HepG2 (cell line): ENCODE measurements at regions of chr3 and their contacts with region 1.

Region 1: DNA sequence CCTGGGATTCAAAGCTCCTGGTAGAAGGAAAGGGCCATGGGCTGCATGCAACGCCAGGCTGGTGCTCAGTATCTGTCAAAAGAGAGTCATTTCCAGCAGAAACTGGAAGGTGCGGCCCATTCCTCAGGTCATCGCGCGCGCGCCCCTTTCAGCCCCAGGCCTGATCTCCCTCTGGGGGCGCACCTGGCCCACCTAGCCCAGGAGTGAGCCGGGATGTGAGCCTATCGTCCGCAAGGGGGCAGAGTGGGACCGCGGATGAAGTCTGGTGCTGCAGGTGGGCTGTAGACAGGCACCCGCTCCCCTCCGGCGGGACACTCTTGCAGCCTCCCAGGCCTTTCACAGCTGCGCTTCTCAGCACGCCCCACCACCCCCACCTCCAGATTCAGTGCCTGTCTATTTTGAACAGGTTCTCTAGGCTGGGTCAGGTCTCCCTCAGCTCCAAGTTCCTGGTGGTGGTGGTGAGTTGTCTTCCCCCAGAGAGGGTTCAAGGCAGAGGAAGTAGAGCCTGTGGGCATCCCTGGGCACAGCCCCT is 5.8 kb upstream of the RPL29 start:
- DNase-seq: peak; percentile 78
- ATAC-seq: peak; percentile 83
- H3K4me3 ChIP-seq: peak overlapping the region in 1 of 3 experiments; percentile 42; a peak in 1 of 6 replicates
- H3K27ac ChIP-seq: no peak overlapping the region
- H3K4me1 ChIP-seq: peaks cover 60% of the 10 kb centered on the region
- H3K27me3 ChIP-seq: peaks cover 0 to 37% of the 10 kb centered on the region in 2 experiments; a peak in 3 of 5 replicates
- CTCF ChIP-seq: peak; percentile 99
- EP300 ChIP-seq: no peak
- POLR2A ChIP-seq: no peak
- RAD21 ChIP-seq: peak; percentile 99

Region 2: GRCh38 chr3:52041118-52041731 is 39.7 kb after region 1 on chr3:
- CTCF ChIA-PET with region 1: no interaction called
- POLR2A ChIA-PET with region 1: no interaction called
- in situ Hi-C with region 1: loop called (anchors 5 kb)
- intact Hi-C with region 1: loop called (anchors 2 kb)
- DNase-seq: peak; percentile 38
- ATAC-seq: peak; percentile 50
- H3K4me3 ChIP-seq: 0 out of 6 replicates have a peak overlapping the region, but pooled peaks of 1 of the 3 experiments have one; percentile 14
- H3K27ac ChIP-seq: no peak overlapping the region
- H3K4me1 ChIP-seq: peaks cover 67% of the 10 kb centered on the region
- H3K27me3 ChIP-seq: no peaks in the 10 kb centered on the region; a peak in 1 of 5 replicates
- CTCF ChIP-seq: peak; percentile 40
- EP300 ChIP-seq: no peak
- POLR2A ChIP-seq: no peak
- RAD21 ChIP-seq: peak; percentile 17; the same call in 1 of the 2 replicates

Region 3: DNA sequence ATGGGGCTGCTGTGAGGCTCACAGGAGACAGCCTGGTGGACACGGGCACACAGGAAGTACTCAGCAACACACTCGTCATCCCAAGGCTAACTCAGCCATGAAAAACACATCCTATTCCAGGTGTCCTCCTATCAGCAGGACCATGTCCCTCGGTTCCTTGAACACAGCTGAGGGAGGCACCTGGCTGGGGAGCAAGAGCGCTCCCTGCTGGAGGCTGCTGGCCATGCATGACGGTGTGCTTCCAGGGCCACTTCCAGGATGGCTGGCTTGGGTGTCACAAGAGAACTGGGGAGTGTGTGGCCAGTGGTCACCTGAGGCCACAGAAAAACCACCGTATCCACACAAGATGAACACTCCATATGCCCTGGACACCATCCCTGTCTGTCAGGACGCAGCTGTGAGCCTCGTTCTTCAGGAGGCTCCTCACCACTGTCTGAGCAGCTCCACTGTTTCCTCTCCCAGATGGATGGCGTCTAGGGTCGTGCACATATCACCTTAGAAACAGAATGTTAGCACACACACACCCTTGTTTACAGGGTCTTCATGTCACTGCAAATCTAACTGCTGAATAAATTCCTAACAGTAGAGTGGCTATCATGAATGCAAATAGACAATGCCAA is 121.7 kb after region 1 on chr3:
- CTCF ChIA-PET with region 1: interaction called, 62 read pairs
- POLR2A ChIA-PET with region 1: interaction called, 4 read pairs
- in situ Hi-C with region 1: no loop called
- intact Hi-C with region 1: loop called (anchors 1 kb)
- DNase-seq: peak; percentile 39
- ATAC-seq: peak; percentile 92
- H3K4me3 ChIP-seq: no peak overlapping the region
- H3K27ac ChIP-seq: no peak overlapping the region
- H3K4me1 ChIP-seq: peaks cover 7% of the 10 kb centered on the region
- H3K27me3 ChIP-seq: no peaks in the 10 kb centered on the region
- CTCF ChIP-seq: peak; percentile 100
- EP300 ChIP-seq: no peak
- POLR2A ChIP-seq: no peak
- RAD21 ChIP-seq: peak; percentile 96

Region 4: DNA sequence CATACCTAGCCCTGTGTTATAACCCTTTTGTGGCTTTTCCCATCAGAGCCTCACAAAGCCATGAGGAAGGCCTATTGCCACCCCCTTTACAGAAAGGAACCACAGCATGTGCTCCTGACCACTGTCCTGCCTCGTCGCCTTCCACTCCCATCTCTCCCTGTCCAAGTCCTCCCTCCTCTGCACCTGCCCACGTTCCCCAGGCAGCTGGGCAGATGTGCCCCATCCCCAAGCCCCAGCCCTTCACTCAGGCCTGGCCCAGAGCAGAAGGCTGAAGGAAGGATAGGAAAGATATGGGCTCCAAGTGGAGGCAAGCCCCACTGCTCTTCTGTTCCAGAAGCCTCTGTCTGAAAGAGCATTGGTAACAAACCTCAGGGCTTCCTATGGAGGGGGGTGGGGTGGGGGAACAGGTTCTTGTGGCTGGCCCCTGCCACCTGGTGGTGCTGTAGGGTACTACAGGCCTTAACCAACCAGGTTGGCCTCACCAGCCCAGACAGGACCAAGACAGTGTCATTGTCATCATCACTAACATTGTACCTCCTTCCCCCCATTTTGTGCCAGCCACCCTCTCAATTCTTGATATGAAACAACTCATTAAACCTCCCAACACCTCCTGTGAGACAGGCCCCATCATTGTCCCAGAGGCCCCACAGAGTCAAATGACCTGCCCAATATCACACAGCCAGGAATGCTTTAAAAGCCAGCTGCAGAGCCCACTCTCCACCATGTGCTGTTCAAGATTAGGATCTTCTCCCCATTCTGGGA is 142.7 kb after region 1 on chr3:
- CTCF ChIA-PET with region 1: interaction called, 110 read pairs
- POLR2A ChIA-PET with region 1: no interaction called
- in situ Hi-C with region 1: loop called (anchors 5 kb)
- intact Hi-C with region 1: no loop called
- DNase-seq: peak; percentile 58
- ATAC-seq: peak; percentile 87
- H3K4me3 ChIP-seq: no peak overlapping the region
- H3K27ac ChIP-seq: no peak overlapping the region
- H3K4me1 ChIP-seq: no peaks in the 10 kb centered on the region
- H3K27me3 ChIP-seq: no peaks in the 10 kb centered on the region; a peak in 1 of 5 replicates
- CTCF ChIP-seq: peak; percentile 93
- EP300 ChIP-seq: no peak
- POLR2A ChIP-seq: no peak
- RAD21 ChIP-seq: peak; percentile 93